Right cardiac atrium (tissue), 5 donors: ENCODE measurements at regions of chr19 and their contacts with region 1.

Region 1: DNA sequence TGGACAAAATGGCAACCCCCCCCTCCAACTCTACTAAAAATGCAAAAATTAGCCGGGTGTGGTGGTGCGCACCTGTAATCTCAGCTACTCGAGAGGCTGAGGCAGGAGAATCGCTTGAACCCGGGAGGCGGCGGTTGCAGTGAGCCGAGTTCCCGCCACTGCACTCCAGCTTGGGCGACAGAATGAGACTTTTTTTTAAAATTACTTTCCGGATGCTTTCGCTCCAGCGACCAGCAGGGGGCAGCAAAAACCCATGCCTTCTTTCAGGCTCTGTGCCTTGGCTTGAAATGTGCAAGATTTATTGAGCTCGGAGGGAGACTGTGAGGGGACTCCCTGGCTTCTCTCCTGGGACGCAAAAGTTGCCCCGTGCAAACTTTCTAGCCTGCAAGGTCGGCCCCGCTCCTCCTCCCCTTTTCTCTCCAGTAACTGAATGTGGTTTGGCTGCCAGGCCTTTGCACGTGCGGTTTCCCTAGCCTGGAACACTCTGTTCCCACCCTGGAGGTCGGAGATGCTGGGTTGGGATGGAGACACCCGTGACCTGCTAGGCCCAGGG is 61.4 kb upstream of the NFIC start:
- DNase-seq: peak; percentile 68 to 87 (median 85)
- ATAC-seq: peak; percentile 56 to 58
- H3K4me3 ChIP-seq: no peak overlapping the region
- H3K27ac ChIP-seq: no peak overlapping the region
- H3K4me1 ChIP-seq: no peaks in the 10 kb centered on the region
- H3K27me3 ChIP-seq: no peaks in the 10 kb centered on the region

Region 2: DNA sequence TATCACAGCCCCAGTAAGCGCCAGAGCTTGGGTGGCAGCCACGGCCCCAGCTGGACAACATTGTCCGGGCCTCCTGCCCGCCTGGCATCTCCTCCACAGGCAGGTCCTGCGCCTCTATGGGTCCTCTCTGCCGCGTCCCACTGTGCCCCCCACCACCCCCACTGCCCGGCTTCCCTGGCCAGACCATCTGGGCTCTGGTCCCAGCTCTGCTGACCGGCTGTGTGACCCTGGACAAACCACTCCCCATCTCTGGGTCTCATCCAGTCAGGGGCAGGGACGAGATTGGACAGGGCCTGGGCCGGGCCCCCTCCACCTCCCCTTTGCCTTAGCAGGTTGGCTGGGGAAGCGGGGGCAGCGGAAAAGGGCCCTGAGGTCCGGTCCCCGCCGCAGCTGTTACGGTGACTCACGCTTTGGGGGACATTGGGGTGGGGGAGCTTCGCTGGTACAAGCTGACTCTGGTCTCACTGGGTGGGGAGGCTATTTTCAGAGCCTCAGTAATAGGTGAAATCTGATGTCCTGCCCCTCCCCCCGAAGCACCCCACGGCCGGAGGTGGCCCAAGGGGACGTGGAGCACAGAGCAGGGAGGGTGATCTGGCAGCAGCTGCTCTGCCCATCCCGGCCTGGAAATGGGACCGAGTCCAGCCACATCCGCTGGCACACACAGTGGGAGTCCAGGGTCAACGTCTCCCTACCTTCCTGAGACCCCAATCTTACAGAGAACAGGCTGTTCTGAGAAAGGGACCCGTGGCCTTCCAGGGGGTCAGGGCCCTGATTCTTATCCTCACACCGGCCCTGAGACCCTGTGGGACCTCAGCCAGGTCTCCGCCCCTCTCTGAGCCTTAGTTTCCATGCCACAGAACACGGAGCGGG is 70.5 kb after region 1 on chr19:
- intact Hi-C with region 1: no loop called
- DNase-seq: peak; percentile 95 to 96 (median 96)
- ATAC-seq: peak; percentile 91 to 92
- H3K4me3 ChIP-seq: no peak overlapping the region
- H3K27ac ChIP-seq: peak overlapping the region; percentile 94
- H3K4me1 ChIP-seq: peaks cover 9% of the 10 kb centered on the region
- H3K27me3 ChIP-seq: no peaks in the 10 kb centered on the region

Region 3: GRCh38 chr19:3403489-3404323 is 98.8 kb after region 1 on chr19:
- intact Hi-C with region 1: no loop called
- DNase-seq: peak; percentile 94 to 97 (median 96)
- ATAC-seq: peak; percentile 78 to 84
- H3K4me3 ChIP-seq: peak overlapping the region; percentile 13
- H3K27ac ChIP-seq: peak overlapping the region; percentile 99
- H3K4me1 ChIP-seq: peaks cover 9% of the 10 kb centered on the region
- H3K27me3 ChIP-seq: no peaks in the 10 kb centered on the region

Region 4: GRCh38 chr19:3479177-3479833 is 174.4 kb after region 1 on chr19:
- intact Hi-C with region 1: loop called in 1 of 4 experiments (anchors 5 kb)
- DNase-seq: peak in 1 of 3 donors; percentile 46
- ATAC-seq: no peak
- H3K4me3 ChIP-seq: no peak overlapping the region
- H3K27ac ChIP-seq: no peak overlapping the region
- H3K4me1 ChIP-seq: no peaks in the 10 kb centered on the region
- H3K27me3 ChIP-seq: no peaks in the 10 kb centered on the region

Region 5: DNA sequence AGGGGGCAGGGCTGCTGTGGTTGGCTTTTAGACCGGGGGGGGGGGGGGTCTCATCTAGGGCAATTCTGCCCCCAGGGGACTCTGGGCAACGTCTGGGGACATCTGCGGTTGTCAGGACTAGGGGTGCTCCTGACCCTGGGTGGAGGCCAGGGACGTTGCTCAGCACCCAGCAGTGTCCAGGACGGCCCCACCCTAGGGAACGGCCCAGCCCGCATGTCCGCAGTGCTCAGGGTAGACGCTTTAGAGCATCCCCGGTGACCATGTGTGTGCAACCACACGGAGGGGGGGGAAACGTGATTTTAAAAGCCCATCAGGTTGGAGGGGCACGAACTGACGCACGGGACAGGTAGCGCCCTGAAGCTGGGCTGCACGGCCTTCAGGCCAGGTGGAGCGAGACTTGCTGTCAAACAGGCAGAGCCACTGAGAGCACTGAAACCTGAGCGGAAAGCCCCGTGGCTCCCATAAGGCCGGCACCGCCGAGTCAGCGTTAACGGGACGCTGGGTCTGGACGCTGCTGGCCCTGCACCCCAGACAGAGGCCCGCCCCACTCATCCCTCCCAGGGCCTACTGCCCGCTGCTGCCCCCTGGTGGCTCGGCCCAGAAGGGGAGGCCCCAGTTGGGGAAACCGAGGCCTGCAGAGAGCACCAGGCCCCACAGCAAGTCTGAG is 313.3 kb after region 1 on chr19:
- intact Hi-C with region 1: loop called in 1 of 4 experiments (anchors 10 kb)
- DNase-seq: peak; percentile 84 to 93 (median 92)
- ATAC-seq: peak; percentile 84 to 85
- H3K4me3 ChIP-seq: no peak overlapping the region
- H3K27ac ChIP-seq: no peak overlapping the region
- H3K4me1 ChIP-seq: no peaks in the 10 kb centered on the region
- H3K27me3 ChIP-seq: no peaks in the 10 kb centered on the region